Cardiac septum (tissue), 1 donor: ENCODE measurements at regions of chr1 and their contacts with region 1.

Region 1: DNA sequence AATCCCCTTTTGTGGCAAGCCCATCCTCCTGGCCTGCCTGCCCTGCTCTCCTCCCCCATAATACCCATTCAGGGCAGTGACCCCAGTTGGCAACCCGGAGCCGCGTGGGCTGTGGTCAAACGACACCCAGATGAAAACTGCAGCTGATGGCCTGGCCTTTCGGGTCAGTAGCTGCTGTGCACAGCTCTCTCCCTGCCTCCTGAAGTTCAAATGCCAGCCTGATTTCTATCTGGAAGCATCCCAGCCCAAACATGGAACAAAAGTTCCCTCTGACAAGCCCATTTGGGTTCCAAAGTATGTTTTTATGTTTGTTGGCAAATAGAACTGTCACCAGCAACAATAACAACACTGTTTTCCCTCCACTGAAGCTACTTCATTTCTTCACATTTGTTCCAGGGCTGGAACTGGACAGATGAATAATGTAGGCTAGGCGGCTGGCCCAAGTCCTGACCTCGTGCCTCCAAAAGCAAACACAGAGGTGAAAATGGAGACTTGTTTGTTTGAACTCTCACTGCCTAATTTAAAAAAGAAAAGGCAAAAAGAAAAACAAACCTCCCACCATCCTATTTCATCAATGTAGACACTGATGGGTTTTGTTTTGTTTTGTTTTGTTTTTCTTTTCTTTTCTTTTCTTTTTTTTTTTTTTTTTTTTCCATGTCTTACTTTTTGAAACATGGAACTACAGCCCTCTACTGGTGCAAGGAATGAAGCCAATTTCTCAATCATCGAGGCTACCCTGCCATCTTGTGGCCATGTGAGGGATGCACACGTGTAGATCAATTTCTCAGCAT is 179.0 kb downstream of the ADSS2 start:
- DNase-seq: no peak

Region 2: DNA sequence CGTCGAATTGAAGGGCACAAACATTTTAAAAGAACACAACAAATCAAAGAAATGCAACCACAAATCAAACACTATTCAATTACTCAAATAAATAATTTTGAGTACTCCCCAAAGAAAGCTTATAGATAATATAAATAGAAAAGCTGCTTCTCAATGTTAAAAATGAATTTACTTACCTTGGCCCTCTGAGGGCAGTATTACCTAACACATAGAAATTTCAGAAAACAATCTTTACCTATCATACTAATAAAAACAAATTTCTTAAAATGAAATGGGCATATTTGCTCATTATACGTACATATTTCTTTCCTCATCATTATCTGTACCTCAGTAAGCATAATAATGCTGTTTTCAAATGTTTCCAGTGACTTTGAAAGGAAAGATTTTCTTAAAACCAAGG is 564.5 kb before region 1 on chr1:
- intact Hi-C with region 1: loop called (anchors 5 kb)
- DNase-seq: no peak

Region 3: GRCh38 chr1:244012202-244012601 is 260.5 kb before region 1 on chr1:
- intact Hi-C with region 1: loop called (anchors 10 kb)
- DNase-seq: no peak